GM10248 (cell line): ENCODE measurements at regions of chr13 and their contacts with region 1.

Region 1: DNA sequence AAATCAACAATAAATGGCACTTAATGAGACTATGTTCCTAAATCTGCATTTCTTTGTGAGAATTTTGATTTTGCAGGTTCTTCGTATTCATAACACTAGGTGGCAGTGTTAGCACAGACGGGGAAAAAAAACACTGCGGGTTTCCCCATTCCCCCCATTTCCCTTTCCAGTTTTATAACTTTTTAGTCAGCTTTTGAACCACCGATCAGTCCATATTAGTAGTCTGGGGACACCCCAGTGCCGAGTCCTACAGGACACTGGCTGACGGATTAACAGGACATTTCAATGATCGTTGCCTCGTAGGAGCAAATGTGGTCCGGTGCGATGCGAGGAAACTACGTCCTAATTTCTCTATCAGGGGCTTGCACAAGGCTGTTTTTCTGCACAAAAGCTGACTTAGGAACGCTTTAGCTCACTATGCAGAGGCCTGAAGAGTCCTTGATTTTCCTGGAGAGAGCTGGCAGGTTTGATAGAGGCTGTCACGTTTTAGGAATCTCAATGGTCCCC is 234.3 kb downstream of the LMO7 start:
- DNase-seq: peak; percentile 37
- CTCF ChIP-seq: peak; percentile 63

Region 2: DNA sequence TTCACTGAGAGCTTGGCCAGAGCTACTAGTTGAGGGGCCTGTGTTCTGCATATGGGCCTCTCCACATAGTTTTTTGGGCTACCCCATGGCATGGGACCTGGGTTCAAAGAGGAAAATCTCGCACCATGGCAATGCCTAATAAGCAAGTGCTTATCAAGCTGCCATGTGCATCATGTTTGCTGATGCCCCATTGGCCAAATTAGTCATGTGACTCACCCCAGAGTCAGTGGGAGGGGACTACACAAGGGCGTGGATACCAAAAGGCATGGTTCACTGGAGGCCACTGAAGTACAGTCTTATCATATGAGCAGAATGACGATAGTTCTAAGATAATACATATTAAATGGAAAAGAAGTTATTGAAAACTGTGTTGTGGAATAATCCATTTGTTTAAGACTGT is 19.5 kb before region 1 on chr13:
- CTCF ChIA-PET with region 1: interaction called, 35 read pairs
- POLR2A ChIA-PET with region 1: no interaction called
- DNase-seq: no peak
- CTCF ChIP-seq: no peak

Region 3: DNA sequence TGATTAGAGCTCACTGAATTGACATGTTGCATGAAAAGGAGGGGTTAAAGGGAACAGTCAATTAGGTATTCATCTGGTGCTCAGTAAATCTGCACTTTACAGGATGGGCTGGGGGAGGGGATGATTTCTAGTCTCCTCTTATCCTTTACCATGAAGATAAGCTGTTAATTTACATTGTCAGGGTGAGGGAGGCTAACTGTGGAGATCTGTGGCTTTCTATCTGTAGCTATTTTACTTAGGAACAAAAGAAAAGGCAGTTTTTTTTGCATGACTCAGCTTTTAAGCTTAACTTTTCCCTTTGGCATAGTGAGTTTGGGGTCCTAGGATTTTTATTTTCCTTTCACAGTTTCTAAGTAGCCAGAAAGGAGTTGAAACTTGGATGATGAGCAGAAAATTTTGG is 19.0 kb after region 1 on chr13:
- CTCF ChIA-PET with region 1: interaction called, 40 read pairs
- POLR2A ChIA-PET with region 1: no interaction called
- DNase-seq: no peak
- CTCF ChIP-seq: no peak

Region 4: GRCh38 chr13:76016799-76017400 is 146.4 kb after region 1 on chr13:
- CTCF ChIA-PET with region 1: interaction called, 56 read pairs
- POLR2A ChIA-PET with region 1: no interaction called
- DNase-seq: peak; percentile 21
- CTCF ChIP-seq: peak; percentile 75

Region 5: DNA sequence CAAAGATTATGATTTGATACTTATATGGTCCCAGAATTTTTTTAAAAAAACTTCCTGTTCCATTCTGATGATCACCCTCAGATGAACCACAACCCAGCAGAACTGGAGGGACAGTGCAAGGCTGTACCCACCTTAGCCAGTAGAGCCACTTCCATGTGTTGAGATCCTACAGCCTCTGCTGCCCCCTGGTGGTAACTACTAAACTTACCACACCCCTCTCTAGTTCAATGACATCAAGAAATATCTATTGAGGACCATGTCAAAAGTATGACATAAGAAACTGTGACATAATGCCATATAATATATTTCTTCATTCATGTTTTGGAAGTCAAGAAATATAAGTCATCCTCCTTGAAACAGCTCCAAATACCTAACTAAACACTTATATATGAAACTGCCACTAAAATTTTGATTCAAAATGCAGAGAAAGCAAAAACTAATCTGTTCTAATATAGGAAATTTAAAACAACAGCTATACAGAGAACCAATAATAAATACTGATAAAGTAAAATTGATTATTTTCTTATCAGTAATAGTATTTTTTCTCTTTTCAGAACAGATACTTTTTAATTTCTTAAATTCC is 603.2 kb after region 1 on chr13:
- CTCF ChIA-PET with region 1: interaction called, 57 read pairs
- POLR2A ChIA-PET with region 1: no interaction called
- DNase-seq: peak; percentile 35
- CTCF ChIP-seq: peak; percentile 67

Region 6: GRCh38 chr13:76903544-76904162 is 1033.2 kb after region 1 on chr13:
- CTCF ChIA-PET with region 1: interaction called, 26 read pairs
- POLR2A ChIA-PET with region 1: no interaction called
- DNase-seq: peak; percentile 61
- CTCF ChIP-seq: peak; percentile 98